Activated T-helper 1 cell treated with anti-CD3 and anti-CD28 coated beads, Interleukin-12 subunit alpha, Interleukin-12 subunit beta, Interleukin-2, Interleukin-4 antibody, amounts not matched to agents 30 ng/mL and 10 ng/mL and 1 ng/mL, durations not matched to agents 14 hours and 24 hours and 36 hours (primary cell): ENCODE measurements at regions of chr13 and their contacts with region 1.

Region 1: DNA sequence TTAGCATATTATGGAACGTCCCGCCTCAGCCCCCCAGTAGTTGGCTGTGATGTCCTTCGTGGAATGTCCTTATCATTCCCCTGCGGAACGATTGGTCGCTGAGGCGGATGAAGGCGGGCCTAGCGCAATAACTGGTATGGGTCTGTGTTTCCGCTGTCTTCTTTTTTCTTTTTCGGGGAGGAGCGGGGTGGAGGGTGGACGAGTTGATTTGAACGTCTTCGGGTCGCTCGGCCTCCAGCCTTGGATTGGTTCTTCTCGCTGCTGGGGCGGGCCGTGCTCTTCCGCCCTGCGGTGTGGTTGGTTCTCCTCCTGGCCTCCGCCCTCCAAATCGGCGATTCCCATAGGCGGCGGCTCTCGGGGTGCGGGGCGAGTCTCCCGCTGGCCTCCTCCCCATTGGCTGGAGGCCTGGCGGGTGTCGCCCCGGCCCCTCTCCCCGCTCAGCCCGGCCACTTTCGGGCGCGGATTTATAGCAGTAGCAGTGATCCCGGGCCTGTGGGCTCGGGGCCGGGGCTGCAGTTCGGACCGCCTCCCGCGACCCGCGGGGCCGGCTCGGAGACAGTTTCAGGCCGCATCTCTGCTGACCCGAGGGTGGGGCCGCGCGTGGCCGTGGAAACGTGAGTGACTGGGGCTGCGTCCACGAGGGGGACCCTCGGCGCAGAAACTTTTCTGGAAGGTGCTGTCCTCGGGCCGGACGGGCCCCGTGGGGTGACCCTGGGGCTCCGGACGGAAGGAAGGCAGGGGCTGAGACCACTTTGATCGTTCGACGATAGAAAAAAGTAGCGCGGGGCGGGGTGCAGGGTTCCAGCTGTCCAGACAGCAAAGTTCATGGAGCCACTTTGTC is 2.1 kb downstream of the ING1 start:
- DNase-seq: peak; percentile 95
- H3K4me3 Mint-ChIP-seq: peak overlapping the region; percentile 98
- H3K27ac Mint-ChIP-seq: peak overlapping the region; percentile 98
- H3K4me1 Mint-ChIP-seq: peaks cover 27% of the 10 kb centered on the region
- H3K27me3 Mint-ChIP-seq: no peaks in the 10 kb centered on the region

Region 2: GRCh38 chr13:110138010-110138699 is 577.5 kb before region 1 on chr13:
- intact Hi-C with region 1: loop called (anchors 2 kb)
- DNase-seq: peak; percentile 59
- H3K4me3 Mint-ChIP-seq: peak overlapping the region; percentile 73
- H3K27ac Mint-ChIP-seq: peak overlapping the region; percentile 73
- H3K4me1 Mint-ChIP-seq: peaks cover 10% of the 10 kb centered on the region
- H3K27me3 Mint-ChIP-seq: peaks cover 41% of the 10 kb centered on the region

Region 3: DNA sequence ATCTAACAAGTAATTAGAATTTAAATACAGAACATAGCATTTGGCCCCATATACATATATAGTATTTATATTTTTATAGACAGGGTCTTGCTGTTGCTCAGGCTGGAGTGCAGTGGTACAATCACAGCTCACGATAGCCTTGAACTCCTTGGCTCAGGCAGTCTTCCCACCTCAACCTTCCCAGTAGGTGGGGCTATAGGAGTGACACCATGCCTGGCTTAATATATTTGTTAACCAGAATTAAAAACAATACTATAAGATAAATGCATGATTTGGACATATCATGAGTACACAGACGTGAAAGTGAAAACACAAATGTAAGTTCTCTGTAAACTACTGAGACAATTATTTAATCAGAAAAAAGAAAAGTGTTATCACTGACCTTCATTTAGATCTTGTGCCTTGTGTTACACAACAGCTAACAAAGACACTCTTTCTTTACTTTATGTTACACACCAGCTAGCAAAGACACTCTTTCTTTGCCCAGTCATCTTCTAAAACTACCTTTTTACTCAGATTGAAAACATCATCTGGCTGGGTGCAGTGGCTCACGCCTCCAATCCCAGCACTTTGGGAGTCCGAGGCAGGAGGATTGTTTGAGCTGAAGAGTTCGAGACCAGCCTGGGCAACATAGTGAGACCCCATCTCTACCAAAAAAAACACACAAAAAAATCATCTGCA is 32.3 kb before region 1 on chr13:
- intact Hi-C with region 1: loop called (anchors 1 kb)
- DNase-seq: no peak
- H3K4me3 Mint-ChIP-seq: no peak overlapping the region
- H3K27ac Mint-ChIP-seq: no peak overlapping the region
- H3K4me1 Mint-ChIP-seq: no peaks in the 10 kb centered on the region
- H3K27me3 Mint-ChIP-seq: no peaks in the 10 kb centered on the region

Region 4: GRCh38 chr13:110756219-110756631 is 40.6 kb after region 1 on chr13:
- intact Hi-C with region 1: no loop called
- DNase-seq: no peak
- H3K4me3 Mint-ChIP-seq: no peak overlapping the region
- H3K27ac Mint-ChIP-seq: no peak overlapping the region
- H3K4me1 Mint-ChIP-seq: no peaks in the 10 kb centered on the region
- H3K27me3 Mint-ChIP-seq: peaks cover 11% of the 10 kb centered on the region

Region 5: DNA sequence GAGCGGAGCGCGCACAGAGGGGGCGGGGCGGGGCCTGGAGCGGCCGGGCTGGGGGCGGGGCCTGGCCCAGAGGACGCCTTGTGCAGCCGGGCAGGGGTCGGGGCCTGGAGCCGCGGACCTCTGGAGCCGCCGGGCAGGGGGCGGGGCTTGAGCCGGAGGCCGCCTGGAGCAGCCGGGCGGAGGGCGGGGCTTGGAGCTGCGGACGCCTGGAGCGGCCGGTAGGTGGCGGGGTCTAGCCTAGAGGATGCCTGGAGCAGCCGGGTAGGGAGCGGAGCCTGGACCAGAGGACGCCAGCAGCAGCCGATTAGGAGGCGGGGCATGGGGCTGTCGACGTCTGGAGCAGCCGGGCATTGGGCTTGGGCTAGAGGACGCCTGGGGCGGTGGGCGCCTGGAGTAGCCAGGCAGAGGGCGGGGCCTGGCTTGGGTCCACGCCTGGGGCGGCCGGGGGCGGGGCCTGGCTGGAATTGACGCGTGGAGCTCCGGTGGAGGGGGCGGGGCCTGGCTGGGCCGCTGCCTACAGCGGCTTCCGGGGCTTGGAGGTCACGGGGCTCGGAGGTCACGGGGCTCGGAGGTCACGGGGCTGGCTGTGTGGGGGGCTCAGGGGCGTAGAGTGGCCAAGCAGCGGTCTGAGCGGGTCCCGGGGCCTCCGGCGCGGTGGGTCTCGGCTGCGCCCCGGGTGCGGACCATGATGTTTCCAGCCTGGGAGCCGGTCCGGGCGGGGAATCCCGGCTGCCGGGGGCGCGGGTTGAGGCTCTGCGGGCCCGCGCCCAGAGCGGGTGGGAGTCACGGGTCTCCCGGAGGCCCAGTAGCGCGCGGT is 199.7 kb after region 1 on chr13 and contains the start of gene ANKRD10:
- intact Hi-C with region 1: loop called (anchors 1 kb)
- DNase-seq: peak; percentile 95
- H3K4me3 Mint-ChIP-seq: peak within 1 kb of the TSS; percentile 94
- H3K27ac Mint-ChIP-seq: peak within 1 kb of the TSS; percentile 95
- H3K4me1 Mint-ChIP-seq: peaks cover 53% of the 10 kb centered on the region
- H3K27me3 Mint-ChIP-seq: no peaks in the 10 kb centered on the region
- total RNA-seq, gene ANKRD10: 163 and 176 TPM in 2 replicates

Region 6: GRCh38 chr13:111153279-111153976 is 437.8 kb after region 1 on chr13:
- intact Hi-C with region 1: loop called (anchors 1 kb)
- DNase-seq: peak; percentile 91
- H3K4me3 Mint-ChIP-seq: peak overlapping the region; percentile 93
- H3K27ac Mint-ChIP-seq: peak overlapping the region; percentile 97
- H3K4me1 Mint-ChIP-seq: peaks cover 25% of the 10 kb centered on the region
- H3K27me3 Mint-ChIP-seq: peaks cover 29% of the 10 kb centered on the region